Panc1 (cell line): ENCODE measurements at regions of chr19 and their contacts with region 1.

Region 1: GRCh38 chr19:38596057-38596981 is 21.4 kb downstream of the MAP4K1 start:
- DNase-seq: peak; percentile 76
- ATAC-seq: peak; percentile 89
- H3K4me3 ChIP-seq: peak overlapping the region; percentile 32 to 50
- H3K27ac ChIP-seq: no peak overlapping the region
- H3K4me1 ChIP-seq: no peaks in the 10 kb centered on the region
- H3K27me3 ChIP-seq: no peaks in the 10 kb centered on the region
- CTCF ChIP-seq: no peak

Region 2: DNA sequence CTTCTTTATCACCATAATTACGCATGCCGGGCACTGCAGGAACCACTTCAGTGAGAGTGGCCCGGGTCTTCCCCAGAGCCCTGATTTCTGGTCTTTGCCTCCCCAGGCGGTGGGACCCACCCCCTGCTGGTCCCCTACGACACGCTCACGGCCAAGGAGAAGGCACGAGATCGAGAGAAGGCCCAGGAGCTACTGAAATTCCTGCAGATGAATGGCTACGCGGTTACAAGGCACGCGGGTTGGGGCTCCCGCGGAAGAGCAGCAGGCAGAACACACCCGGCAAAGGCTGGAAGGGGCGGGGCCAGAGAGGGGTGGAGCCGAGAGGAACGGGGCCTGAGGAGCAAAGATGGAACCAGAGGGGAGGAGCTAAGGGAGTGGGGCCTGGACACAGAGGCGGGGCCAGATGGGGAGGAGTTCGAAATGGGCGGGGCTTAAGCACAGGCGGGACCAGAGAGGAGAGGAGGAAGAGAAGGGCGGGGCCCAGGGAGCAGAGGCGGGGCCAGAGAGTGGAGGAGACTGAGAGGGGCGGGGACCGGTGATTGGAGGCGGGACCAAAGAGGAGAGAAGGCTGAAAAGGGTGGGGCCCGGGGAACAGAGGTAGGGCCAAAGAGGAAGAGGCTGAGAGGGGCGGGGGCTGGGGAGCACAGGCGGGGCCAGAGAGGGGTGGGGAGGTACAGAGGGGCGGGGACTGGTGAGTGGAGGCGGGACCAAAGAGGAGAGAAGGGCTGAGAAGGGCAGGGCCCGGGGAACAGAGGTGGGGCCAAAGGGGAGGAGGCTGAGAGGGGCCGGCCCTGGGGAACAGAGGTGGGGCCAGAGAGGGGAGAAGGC is 89.4 kb before region 1 on chr19:
- CTCF ChIA-PET with region 1: interaction called, 11 read pairs
- POLR2A ChIA-PET with region 1: no interaction called
- in situ Hi-C with region 1: no loop called
- intact Hi-C with region 1: no loop called
- DNase-seq: peak; percentile 100
- ATAC-seq: peak; percentile 86
- H3K4me3 ChIP-seq: peak overlapping the region; percentile 29 to 64
- H3K27ac ChIP-seq: peak overlapping the region; percentile 58
- H3K4me1 ChIP-seq: peaks cover 8% of the 10 kb centered on the region
- H3K27me3 ChIP-seq: 0 out of 2 replicates have a peak, but pooled peaks cover 3% of the 10 kb centered on the region
- CTCF ChIP-seq: no peak

Region 3: DNA sequence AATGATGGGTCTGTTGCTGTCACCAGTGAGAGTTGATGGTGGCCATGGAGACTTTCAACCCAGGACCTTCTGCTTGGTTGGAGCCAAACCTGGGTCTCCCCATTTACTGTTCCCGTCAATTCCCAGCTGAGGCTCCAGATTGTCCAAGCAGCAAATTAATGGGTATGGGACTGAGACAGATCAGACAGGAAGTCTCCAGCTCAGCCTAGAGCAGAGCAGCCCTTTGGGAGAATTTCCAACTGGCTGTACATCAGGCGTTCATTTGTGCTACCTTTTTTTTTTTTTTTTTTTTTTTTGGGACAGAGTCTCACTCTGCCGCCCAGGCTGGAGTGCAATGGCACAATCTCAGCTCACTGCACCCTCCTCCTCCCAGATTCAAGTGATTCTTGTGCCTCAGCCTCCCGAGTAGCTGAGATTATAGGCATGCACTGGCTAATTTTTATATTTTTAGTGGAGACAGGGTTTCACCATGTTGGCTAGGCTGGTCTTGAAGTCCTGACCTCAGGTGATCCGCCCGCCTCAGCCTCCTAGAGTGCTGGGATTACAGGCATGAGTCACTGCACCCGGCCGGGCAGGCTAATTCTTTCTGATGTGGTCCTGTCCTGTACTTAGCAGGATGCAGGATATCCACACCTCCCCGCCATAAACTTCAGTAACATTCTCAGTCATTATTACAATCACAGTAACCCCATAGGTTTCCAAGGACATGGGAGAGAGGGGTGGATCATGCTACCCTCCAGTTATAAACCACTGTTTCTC is 1604.2 kb after region 1 on chr19:
- CTCF ChIA-PET with region 1: no interaction called
- POLR2A ChIA-PET with region 1: interaction called, 14 read pairs
- in situ Hi-C with region 1: no loop called
- intact Hi-C with region 1: no loop called
- DNase-seq: no peak
- ATAC-seq: peak; percentile 7; the same call in 1 of the 2 replicates
- H3K4me3 ChIP-seq: no peak overlapping the region
- H3K27ac ChIP-seq: no peak overlapping the region
- H3K4me1 ChIP-seq: no peaks in the 10 kb centered on the region
- H3K27me3 ChIP-seq: no peaks in the 10 kb centered on the region
- CTCF ChIP-seq: no peak

Region 4: GRCh38 chr19:40331069-40331468 is 1734.8 kb after region 1 on chr19:
- CTCF ChIA-PET with region 1: interaction called, 3 read pairs
- POLR2A ChIA-PET with region 1: interaction called, 13 read pairs
- in situ Hi-C with region 1: no loop called
- intact Hi-C with region 1: no loop called
- DNase-seq: no peak
- ATAC-seq: no peak
- H3K4me3 ChIP-seq: no peak overlapping the region
- H3K27ac ChIP-seq: no peak overlapping the region
- H3K4me1 ChIP-seq: no peaks in the 10 kb centered on the region
- H3K27me3 ChIP-seq: no peaks in the 10 kb centered on the region
- CTCF ChIP-seq: no peak